ENCODE measurements at regions of chr20 and their contacts with region 1.

Region 1: DNA sequence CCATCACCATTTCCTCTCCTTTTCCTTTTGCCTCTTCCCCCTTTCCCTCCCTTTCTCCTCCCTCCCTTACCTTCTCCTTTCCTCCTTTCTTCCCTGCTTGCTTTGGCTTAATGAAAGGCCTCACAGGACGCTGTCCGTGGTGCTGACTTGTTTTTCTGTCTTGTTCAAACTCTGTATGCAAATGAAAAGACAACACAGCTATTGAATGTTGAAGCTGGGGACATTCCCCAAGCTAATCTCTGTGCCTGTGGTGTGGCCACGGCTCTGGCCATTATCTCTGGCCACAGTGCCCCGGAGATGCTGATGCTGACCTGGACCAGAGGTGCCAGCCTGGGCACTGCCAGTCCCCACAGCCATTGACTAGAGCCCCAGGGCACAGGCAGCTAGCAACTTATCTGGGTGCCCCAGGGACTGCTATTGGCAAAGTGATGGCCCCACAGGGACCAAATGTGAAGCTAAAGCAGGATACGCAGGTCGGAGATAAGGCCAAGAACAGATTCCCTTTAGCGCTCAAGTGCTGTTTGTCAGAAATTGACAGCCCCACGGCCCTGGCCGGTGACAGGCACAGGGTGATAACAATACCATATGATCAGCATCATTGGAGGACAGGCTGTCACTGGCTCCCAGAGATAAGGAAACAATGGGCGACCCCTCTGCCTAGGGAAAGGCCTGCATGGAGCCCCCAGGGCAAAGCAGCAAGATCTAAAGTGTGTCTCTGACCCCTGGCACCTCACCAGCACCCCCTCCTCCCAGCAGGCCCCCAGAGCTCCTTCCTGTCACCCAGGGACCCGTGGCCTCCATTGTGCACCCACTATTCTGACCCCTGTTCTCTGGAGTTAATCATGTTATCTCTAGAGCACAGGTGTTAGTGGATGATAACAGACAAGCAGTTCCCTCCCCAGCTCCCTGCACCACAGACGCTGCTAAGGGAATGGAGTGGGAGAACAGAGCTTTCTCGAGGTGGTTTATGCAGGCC is 31.6 kb upstream of the SLC32A1 start:
- DNase-seq: peak; percentile 68 to 86 (median 79)
- ATAC-seq: peak; percentile 85
- H3K4me3 ChIP-seq: no peak overlapping the region
- H3K27ac ChIP-seq: no peak overlapping the region
- H3K4me1 ChIP-seq: peaks cover 11 to 13% of the 10 kb centered on the region in 2 experiments; a peak in 4 of 5 replicates
- H3K27me3 ChIP-seq: peaks cover 16 to 17% of the 10 kb centered on the region in 2 experiments
- CTCF ChIP-seq: no peak
- EP300 ChIP-seq: peak; percentile 64
- POLR2A ChIP-seq: no peak
- RAD21 ChIP-seq: no peak

Region 2: DNA sequence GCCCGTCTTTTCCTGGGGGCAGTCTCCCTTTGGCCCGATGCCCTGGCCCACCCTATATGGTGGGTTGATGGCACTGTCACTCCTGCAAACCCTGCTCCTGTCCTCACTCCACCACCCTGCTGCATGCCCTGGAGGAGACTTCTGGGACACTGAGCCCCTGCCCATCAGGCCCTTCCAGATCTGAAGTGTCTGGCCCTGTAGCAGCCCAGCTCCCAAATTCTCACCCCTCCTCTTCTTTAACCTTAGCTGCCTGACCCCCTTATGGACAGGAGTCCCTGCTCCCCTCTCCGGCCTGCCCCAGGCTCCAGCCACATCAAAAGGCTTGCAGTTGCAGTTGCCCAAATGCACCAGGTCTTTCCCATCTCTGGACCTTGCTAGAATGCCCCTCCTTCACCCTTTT is 10.8 kb after region 1 on chr20:
- CTCF ChIA-PET with region 1: no interaction called
- POLR2A ChIA-PET with region 1: interaction called, 11 read pairs
- in situ Hi-C with region 1: no loop called
- intact Hi-C with region 1: no loop called
- DNase-seq: no peak
- ATAC-seq: no peak
- H3K4me3 ChIP-seq: no peak overlapping the region
- H3K27ac ChIP-seq: no peak overlapping the region
- H3K4me1 ChIP-seq: no peaks in the 10 kb centered on the region
- H3K27me3 ChIP-seq: peaks cover 37 to 82% of the 10 kb centered on the region in 2 experiments
- CTCF ChIP-seq: no peak
- EP300 ChIP-seq: no peak
- POLR2A ChIP-seq: no peak
- RAD21 ChIP-seq: no peak

Measured in K562 (cell line).